Calu3 (cell line): ENCODE measurements at regions of chr3 and their contacts with region 1.

Region 1: GRCh38 chr3:4751502-4752101 is 227.6 kb upstream of the BHLHE40 start:
- DNase-seq: peak; percentile 42
- H3K4me3 Mint-ChIP-seq: peak overlapping the region; percentile 69
- H3K27ac Mint-ChIP-seq: peak overlapping the region; percentile 99
- H3K4me1 Mint-ChIP-seq: peaks cover 46% of the 10 kb centered on the region
- H3K27me3 Mint-ChIP-seq: no peaks in the 10 kb centered on the region
- CTCF ChIP-seq: no peak

Region 2: GRCh38 chr3:4394048-4394447 is 357.6 kb before region 1 on chr3:
- CTCF ChIA-PET with region 1: no interaction called
- intact Hi-C with region 1: no loop called
- DNase-seq: no peak
- H3K4me3 Mint-ChIP-seq: no peak overlapping the region
- H3K27ac Mint-ChIP-seq: no peak overlapping the region
- H3K4me1 Mint-ChIP-seq: no peaks in the 10 kb centered on the region
- H3K27me3 Mint-ChIP-seq: no peaks in the 10 kb centered on the region
- CTCF ChIP-seq: no peak

Region 3: DNA sequence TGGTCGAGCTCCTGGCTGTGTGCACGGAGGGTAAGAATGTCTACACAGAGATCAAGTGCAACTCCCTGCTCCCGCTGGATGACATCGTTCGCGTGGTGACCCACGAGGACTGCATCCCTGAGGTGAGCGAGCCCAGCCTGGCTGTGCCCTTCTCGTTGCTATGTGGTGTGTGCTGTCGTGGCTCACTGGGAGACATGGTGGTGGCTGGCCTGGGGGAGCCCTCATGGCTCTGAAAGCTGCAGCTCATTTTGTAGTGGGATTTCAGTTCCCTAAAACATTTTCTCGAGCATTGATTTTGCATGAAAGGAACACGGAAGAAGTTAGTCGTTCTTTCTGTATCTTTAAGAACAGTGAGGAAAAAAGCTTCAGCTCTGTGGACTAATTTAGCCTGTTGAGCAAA is 58.0 kb before region 1 on chr3:
- CTCF ChIA-PET with region 1: no interaction called
- intact Hi-C with region 1: no loop called
- DNase-seq: no peak
- H3K4me3 Mint-ChIP-seq: no peak overlapping the region
- H3K27ac Mint-ChIP-seq: no peak overlapping the region
- H3K4me1 Mint-ChIP-seq: no peaks in the 10 kb centered on the region
- H3K27me3 Mint-ChIP-seq: no peaks in the 10 kb centered on the region
- CTCF ChIP-seq: no peak

Region 4: GRCh38 chr3:4765212-4765611 is 13.6 kb after region 1 on chr3:
- CTCF ChIA-PET with region 1: no interaction called
- intact Hi-C with region 1: no loop called
- DNase-seq: no peak
- H3K4me3 Mint-ChIP-seq: no peak overlapping the region
- H3K27ac Mint-ChIP-seq: no peak overlapping the region
- H3K4me1 Mint-ChIP-seq: no peaks in the 10 kb centered on the region
- H3K27me3 Mint-ChIP-seq: no peaks in the 10 kb centered on the region
- CTCF ChIP-seq: no peak

Region 5: DNA sequence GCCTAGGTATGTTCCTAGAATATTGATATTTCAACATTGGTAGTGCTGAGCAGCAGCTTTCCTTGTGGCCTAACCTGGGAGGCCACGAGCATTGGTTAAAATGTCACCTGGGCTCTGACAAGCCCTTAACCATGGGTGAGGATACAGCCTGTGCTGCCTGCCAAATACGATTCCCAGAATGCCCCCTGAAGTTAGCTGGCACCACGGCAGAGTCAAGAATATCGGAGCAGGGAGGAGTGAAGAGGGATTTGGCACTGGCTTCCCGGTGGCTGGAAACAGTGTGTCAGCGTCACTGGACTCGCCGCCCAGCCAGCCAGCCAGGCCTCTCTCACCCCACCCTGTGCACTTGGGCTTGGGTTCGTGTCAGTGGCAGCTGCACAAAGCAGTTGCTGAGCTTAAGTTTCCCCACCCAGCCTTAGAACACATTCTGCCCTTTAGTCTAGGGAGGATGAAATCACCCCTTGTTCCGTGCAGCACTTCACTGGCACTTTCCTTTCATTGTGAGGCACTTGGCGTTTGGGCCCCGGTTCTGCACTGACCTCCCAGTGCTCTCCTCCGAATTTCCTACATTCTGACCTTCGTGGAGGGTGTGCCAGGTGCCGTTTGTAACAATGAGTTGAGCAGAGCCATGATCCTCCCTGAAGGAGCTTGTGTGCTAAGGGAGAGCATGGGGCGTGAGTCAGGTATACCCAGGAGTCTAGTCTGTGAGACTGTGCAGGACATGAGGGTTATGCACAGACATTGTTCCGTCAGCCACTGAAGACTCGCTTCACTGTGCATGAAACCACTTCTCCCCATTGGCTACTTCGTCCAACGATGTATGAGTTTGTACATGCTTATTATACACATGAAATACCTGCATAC is 74.9 kb after region 1 on chr3:
- CTCF ChIA-PET with region 1: no interaction called
- intact Hi-C with region 1: loop called (anchors 5 kb)
- DNase-seq: peak; percentile 48
- H3K4me3 Mint-ChIP-seq: peak overlapping the region; percentile 39
- H3K27ac Mint-ChIP-seq: peak overlapping the region; percentile 65
- H3K4me1 Mint-ChIP-seq: peaks cover 57% of the 10 kb centered on the region
- H3K27me3 Mint-ChIP-seq: no peaks in the 10 kb centered on the region
- CTCF ChIP-seq: no peak

Region 6: DNA sequence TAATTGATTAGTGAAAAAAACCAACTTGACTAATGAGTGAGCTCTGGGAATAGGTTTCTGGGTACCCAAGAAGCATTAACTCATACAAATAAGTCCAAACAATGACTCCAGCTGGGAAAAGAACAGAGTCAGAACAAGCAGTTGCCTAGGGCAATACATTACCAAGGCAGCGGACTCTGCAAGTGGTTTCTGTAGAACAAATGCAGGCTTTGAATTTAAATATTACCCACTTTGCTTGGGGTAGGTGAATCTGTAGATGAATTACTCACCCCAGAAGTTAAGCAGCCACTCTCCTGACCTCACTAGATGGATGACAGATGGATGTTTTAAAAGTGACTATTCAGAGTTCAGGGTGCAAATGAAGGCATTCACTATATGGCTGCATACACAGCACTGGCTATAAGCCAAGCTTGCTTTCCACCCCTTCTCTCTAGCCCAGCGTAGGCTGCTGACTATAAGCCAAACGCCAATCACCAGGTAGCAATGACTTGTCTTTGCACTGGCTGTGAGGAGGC is 154.6 kb after region 1 on chr3:
- CTCF ChIA-PET with region 1: no interaction called
- intact Hi-C with region 1: loop called (anchors 5 kb)
- DNase-seq: peak; percentile 41
- H3K4me3 Mint-ChIP-seq: no peak overlapping the region
- H3K27ac Mint-ChIP-seq: peak overlapping the region; percentile 33
- H3K4me1 Mint-ChIP-seq: peaks cover 21% of the 10 kb centered on the region
- H3K27me3 Mint-ChIP-seq: no peaks in the 10 kb centered on the region
- CTCF ChIP-seq: no peak

Region 7: GRCh38 chr3:5181469-5182141 is 430.0 kb after region 1 on chr3:
- CTCF ChIA-PET with region 1: no interaction called
- intact Hi-C with region 1: no loop called
- DNase-seq: no peak
- H3K4me3 Mint-ChIP-seq: no peak overlapping the region
- H3K27ac Mint-ChIP-seq: no peak overlapping the region
- H3K4me1 Mint-ChIP-seq: no peaks in the 10 kb centered on the region
- H3K27me3 Mint-ChIP-seq: no peaks in the 10 kb centered on the region
- CTCF ChIP-seq: no peak